CD8-positive, alpha-beta memory T cell (primary cell): ENCODE measurements at regions of chr17 and their contacts with region 1.

Region 1: DNA sequence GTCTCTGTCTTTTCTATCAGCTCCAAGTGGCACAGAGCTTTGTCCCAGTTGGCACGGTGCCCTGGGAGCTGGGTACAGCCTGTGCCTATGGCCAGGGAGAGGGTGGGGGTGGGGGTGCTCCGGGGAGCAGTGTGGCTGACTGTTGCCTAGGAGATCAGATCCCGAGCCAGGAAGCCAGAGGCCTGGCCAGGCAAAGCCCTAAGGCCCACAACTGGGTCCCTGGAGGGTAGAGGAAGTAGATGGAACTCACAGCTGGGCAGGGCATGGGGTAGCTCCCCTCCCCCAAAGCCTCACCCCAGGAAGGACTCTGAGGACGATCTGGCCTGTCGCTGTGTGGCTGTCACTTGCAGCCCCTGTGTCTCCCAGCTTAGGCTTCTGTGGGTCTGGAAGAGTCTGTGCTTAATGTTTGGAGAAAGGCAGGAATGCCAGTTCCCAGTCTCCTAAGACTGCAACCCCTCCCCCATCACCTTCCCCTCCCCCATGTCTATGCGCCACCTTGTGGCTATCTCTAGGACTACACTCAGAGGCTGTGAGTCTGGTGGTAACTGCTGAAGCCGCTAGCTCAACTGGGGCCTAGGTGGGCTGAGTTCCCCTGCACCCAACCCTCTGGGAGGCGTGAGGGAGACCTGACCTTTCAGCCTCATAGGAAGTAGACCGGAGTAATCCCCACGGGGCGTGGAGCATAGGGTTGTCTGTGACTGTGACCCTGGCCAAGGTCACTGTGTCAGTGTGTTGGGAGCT is 12.6 kb downstream of the THRA start:
- DNase-seq: peak; percentile 54 to 79 (median 56)
- H3K4me3 ChIP-seq: no peak overlapping the region
- H3K4me3 Mint-ChIP-seq: peak overlapping the region in 1 of 7 donors; percentile 73
- H3K27ac ChIP-seq: peak overlapping the region; percentile 6
- H3K27ac Mint-ChIP-seq: peak overlapping the region in 5 of 8 donors; percentile 62 to 87 (median 79)
- H3K4me1 ChIP-seq: peaks cover 38% of the 10 kb centered on the region
- H3K4me1 Mint-ChIP-seq: peaks cover 30 to 53% (median 38%) of the 10 kb centered on the region in 3 donors
- H3K27me3 ChIP-seq: no peaks in the 10 kb centered on the region
- H3K27me3 Mint-ChIP-seq: peaks cover 0 to 3% of the 10 kb centered on the region in 2 donors

Region 2: DNA sequence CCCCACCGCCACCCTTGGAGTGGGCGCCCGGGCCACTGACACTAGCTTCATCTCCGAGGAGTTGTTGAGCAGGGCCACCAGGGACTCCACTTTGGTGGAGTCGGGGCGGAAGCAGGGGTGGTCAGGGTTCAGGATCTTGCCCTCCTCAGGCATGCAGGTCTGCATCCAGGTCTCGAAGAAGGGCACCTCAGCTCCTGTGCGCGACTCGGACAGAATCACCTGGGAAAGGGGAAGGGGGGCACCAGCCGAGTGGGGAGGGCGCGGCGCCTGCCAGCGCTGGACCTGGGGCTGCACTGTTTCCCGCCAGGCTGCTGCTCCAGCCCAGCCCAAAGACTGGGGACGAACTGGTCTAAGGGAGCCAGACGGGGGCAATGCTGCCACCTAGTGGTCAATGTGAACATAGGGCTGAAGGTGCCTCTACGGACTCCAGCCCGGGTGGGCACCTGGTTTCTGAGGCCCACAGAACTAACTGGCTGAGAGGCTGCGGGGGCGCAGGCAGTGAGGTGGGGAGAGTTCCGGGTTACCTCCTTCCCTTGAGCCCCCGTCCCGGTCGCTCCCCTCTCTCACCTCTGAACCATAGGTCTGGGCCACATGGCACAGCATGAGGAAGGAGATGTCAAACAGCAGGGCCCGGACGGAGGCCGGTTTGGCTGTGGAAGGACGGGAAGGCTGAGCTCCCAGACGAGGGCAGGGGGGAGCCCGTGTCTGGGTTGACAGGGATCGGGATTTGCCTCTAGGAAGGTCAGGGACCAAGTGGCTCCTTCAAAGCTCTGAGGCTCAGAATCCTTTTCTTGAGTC is 48.4 kb before region 1 on chr17:
- CTCF ChIA-PET with region 1: interaction called, 16 read pairs
- POLR2A ChIA-PET with region 1: no interaction called
- DNase-seq: peak; percentile 63 to 83 (median 72)
- H3K4me3 ChIP-seq: no peak overlapping the region
- H3K4me3 Mint-ChIP-seq: no peak overlapping the region
- H3K27ac ChIP-seq: no peak overlapping the region
- H3K27ac Mint-ChIP-seq: peak overlapping the region in 3 of 8 donors; percentile 15 to 86 (median 23)
- H3K4me1 ChIP-seq: peaks cover 19% of the 10 kb centered on the region
- H3K4me1 Mint-ChIP-seq: peaks cover 20 to 22% (median 21%) of the 10 kb centered on the region in 3 donors
- H3K27me3 ChIP-seq: no peaks in the 10 kb centered on the region
- H3K27me3 Mint-ChIP-seq: no peaks in the 10 kb centered on the region

Region 3: DNA sequence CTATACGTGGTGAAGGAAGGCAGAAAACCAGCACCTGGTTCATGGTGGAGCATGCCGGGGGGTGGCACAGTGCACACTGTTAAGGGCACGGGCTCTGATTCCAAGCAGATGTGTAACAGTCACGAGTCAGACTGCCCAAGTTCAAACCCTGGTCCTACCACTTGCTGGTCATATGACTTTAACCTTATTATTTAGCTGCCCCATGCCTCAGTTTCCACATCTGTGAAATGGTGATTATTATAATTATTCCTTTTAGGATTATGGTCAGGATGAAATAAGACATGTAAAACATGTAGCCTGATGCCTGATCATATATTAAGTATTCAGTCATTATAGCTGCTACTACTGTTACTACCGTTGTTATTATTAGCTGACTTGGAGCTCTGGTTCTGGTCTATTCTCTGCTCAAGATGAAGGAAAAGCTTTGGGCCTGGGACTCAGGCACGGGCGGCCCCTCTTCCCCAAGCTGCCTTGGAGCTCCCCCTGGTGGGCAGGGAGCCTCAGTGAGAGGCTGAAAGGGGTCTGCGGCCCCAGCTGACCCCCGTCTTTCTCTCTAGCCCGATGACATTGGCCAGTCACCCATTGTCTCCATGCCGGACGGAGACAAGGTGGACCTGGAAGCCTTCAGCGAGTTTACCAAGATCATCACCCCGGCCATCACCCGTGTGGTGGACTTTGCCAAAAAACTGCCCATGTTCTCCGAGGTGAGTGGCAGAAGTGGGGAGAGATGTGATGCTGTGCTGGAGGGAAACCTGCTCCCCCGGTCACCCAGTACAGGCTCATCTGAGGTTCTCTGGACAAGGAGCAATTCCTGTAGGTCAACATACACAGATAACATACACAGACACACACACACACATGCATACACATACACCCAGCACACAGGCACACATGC is 11.0 kb after region 1 on chr17:
- CTCF ChIA-PET with region 1: interaction called, 18 read pairs
- POLR2A ChIA-PET with region 1: no interaction called
- DNase-seq: peak in 4 of 5 donors; percentile 45 to 73 (median 54)
- H3K4me3 ChIP-seq: no peak overlapping the region
- H3K4me3 Mint-ChIP-seq: no peak overlapping the region
- H3K27ac ChIP-seq: no peak overlapping the region
- H3K27ac Mint-ChIP-seq: peak overlapping the region in 6 of 8 donors; percentile 11 to 78 (median 46)
- H3K4me1 ChIP-seq: peaks cover 6% of the 10 kb centered on the region
- H3K4me1 Mint-ChIP-seq: peaks cover 5 to 13% (median 12%) of the 10 kb centered on the region in 3 donors
- H3K27me3 ChIP-seq: no peaks in the 10 kb centered on the region
- H3K27me3 Mint-ChIP-seq: no peaks in the 10 kb centered on the region

Region 4: DNA sequence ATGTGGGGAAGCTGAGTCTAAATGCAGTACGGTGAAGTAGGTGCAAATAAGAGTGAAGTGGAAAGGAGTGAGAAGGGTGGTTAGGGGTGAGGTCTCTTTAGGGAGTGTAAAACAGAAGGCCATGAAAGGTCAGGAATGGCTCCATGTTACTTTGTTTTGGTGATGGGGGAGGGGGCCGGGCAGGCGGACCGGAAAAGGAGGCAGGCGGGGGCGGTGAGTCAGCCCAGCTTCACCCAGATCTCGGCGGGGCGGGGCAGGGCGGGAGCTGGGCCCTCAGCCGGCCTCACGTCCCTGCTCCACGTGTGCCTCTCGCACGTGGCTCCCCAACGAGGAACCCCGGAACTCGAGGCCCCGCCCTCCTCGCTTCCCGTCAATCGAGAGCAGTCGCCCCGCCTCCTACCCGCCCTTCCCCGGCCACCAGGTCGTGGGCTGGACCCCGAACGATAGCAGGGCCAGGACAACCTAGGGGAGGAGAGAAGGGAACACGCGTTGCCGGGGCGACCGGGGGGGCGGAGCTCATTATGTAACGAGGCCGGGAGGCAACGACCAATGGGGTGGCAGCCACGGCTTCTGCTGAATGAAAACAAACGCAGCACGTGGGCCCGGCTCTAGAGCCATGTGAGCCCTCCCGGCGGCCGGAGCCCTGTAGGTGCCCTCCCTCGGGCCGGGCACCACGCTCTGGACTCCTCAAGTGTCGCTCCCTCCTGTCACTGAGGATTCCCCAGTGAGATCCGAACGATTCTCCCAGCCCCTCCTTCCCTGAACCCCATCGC is 23.7 kb after region 1 on chr17:
- CTCF ChIA-PET with region 1: interaction called, 45 read pairs
- POLR2A ChIA-PET with region 1: interaction called, 10 read pairs
- DNase-seq: peak; percentile 99 to 100 (median 99)
- H3K4me3 ChIP-seq: peak overlapping the region; percentile 94
- H3K4me3 Mint-ChIP-seq: peak overlapping the region; percentile 82 to 99 (median 95)
- H3K27ac ChIP-seq: peak overlapping the region; percentile 88
- H3K27ac Mint-ChIP-seq: peak overlapping the region; percentile 81 to 100 (median 95)
- H3K4me1 ChIP-seq: peaks cover 87% of the 10 kb centered on the region
- H3K4me1 Mint-ChIP-seq: peaks cover 78 to 94% (median 86%) of the 10 kb centered on the region in 3 donors
- H3K27me3 ChIP-seq: no peaks in the 10 kb centered on the region
- H3K27me3 Mint-ChIP-seq: peaks cover 0 to under 1% of the 10 kb centered on the region in 2 donors

Region 5: DNA sequence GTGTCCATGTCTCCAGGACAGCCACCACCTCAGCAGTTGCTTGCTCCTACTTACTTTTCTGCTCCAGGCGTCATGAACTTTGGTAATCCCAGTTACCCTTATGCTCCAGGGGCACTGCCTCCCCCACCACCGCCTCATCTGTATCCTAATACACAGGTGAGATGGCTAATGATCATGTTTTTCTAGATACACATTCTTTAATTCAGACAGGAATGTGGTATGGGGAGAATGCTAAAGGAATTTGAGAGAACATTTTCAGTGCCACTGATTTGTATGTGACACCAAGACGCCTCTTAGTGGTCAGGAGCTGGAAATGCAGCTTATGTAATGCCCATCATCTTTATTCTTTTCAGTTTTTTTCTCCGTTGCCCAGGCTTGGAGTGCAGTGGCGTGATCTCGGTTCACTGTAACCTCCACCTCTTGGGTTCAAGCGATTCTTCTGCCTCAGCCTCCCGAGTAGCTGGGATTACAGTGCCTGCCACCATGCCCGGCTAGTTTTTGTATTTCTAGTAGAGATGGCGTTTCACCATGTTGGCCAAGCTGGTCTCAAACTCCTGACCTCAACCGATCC is 93.0 kb after region 1 on chr17:
- CTCF ChIA-PET with region 1: interaction called, 19 read pairs
- POLR2A ChIA-PET with region 1: no interaction called
- DNase-seq: peak in 4 of 5 donors; percentile 13 to 59 (median 56)
- H3K4me3 ChIP-seq: no peak overlapping the region
- H3K4me3 Mint-ChIP-seq: no peak overlapping the region
- H3K27ac ChIP-seq: no peak overlapping the region
- H3K27ac Mint-ChIP-seq: peak overlapping the region; percentile 12 to 96 (median 85)
- H3K4me1 ChIP-seq: no peaks in the 10 kb centered on the region
- H3K4me1 Mint-ChIP-seq: peaks cover 7 to 15% (median 9%) of the 10 kb centered on the region in 3 donors
- H3K27me3 ChIP-seq: no peaks in the 10 kb centered on the region
- H3K27me3 Mint-ChIP-seq: no peaks in the 10 kb centered on the region